Psoas muscle (tissue), 8 donors: ENCODE measurements at regions of chr9 and their contacts with region 1.

Region 1: GRCh38 chr9:131149688-131150053 is 24.3 kb downstream of the NUP214 start:
- DNase-seq: no peak
- ATAC-seq: no peak
- H3K4me3 ChIP-seq: no peak overlapping the region
- H3K27ac ChIP-seq: no peak overlapping the region
- H3K4me1 ChIP-seq: no peaks in the 10 kb centered on the region
- H3K27me3 ChIP-seq: no peaks in the 10 kb centered on the region
- CTCF ChIP-seq: no peak

Region 2: DNA sequence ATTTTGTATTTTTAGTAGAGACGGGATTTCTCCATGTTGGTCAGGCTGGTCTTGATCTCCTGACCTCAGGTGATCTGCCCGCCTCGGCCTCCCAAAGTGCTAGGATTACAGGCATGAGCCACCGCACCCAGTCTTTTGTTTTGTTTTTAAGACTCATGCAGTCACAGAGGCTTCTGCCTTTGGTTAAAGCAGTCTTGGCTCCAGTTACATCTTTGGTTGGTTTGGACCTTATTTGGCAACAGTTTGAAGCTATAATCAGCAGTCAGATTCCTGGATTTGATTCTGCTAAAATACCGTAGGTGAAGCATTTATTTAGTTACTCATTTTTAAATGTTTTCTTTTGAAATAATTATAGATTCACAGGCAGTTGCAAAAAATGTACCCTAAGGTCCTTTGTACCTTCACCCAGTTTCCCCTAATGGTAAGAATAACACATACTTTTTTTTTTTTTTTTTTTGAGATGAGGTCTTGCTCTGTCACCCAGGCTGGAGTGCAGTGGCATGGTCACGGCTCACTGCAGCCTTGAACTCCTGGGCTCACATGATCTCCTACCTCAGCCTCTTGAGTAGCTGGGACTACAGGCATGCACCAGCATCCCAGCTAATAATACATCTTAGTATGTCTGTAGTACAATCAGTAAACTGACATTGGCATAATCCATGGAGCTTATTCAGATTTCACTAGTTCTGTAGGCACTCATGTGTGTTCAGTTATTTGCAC is 1298.7 kb before region 1 on chr9:
- intact Hi-C with region 1: no loop called
- DNase-seq: no peak
- ATAC-seq: no peak
- H3K4me3 ChIP-seq: no peak overlapping the region
- H3K27ac ChIP-seq: no peak overlapping the region
- H3K4me1 ChIP-seq: no peaks in the 10 kb centered on the region
- H3K27me3 ChIP-seq: no peaks in the 10 kb centered on the region
- CTCF ChIP-seq: no peak

Region 3: DNA sequence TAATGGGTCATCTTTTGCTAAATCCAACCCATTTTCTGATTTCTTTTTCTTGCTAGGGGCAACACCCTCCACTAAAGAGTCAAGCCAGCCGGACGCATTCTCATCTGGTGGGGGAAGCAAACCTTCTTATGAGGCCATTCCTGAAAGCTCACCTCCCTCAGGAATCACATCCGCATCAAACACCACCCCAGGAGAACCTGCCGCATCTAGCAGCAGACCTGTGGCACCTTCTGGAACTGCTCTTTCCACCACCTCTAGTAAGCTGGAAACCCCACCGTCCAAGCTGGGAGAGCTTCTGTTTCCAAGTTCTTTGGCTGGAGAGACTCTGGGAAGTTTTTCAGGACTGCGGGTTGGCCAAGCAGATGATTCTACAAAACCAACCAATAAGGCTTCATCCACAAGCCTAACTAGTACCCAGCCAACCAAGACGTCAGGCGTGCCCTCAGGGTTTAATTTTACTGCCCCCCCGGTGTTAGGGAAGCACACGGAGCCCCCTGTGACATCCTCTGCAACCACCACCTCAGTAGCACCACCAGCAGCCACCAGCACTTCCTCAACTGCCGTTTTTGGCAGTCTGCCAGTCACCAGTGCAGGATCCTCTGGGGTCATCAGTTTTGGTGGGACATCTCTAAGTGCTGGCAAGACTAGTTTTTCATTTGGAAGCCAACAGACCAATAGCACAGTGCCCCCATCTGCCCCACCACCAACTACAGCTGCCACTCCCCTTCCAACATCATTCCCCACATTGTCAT is 47.7 kb after region 1 on chr9:
- intact Hi-C with region 1: loop called (anchors 10 kb)
- DNase-seq: no peak
- ATAC-seq: no peak
- H3K4me3 ChIP-seq: no peak overlapping the region
- H3K27ac ChIP-seq: no peak overlapping the region
- H3K4me1 ChIP-seq: no peaks in the 10 kb centered on the region
- H3K27me3 ChIP-seq: no peaks in the 10 kb centered on the region
- CTCF ChIP-seq: no peak

Region 4: GRCh38 chr9:131203431-131204218 is 54.0 kb after region 1 on chr9:
- intact Hi-C with region 1: loop called (anchors 10 kb)
- DNase-seq: no peak
- ATAC-seq: no peak
- H3K4me3 ChIP-seq: no peak overlapping the region
- H3K27ac ChIP-seq: no peak overlapping the region
- H3K4me1 ChIP-seq: no peaks in the 10 kb centered on the region
- H3K27me3 ChIP-seq: no peaks in the 10 kb centered on the region
- CTCF ChIP-seq: no peak

Region 5: GRCh38 chr9:131310833-131311554 is 161.3 kb after region 1 on chr9:
- intact Hi-C with region 1: no loop called
- DNase-seq: peak; percentile 60 to 76
- ATAC-seq: peak; percentile 57 to 72 (median 62)
- H3K4me3 ChIP-seq: no peak overlapping the region
- H3K27ac ChIP-seq: peak overlapping the region; percentile 83
- H3K4me1 ChIP-seq: peaks cover 12% of the 10 kb centered on the region
- H3K27me3 ChIP-seq: no peaks in the 10 kb centered on the region
- CTCF ChIP-seq: no peak

Region 6: GRCh38 chr9:131459056-131459455 is 309.4 kb after region 1 on chr9:
- intact Hi-C with region 1: loop called in 1 of 2 experiments (anchors 10 kb)
- DNase-seq: no peak
- ATAC-seq: peak in 1 of 4 donors; percentile 38
- H3K4me3 ChIP-seq: no peak overlapping the region
- H3K27ac ChIP-seq: no peak overlapping the region
- H3K4me1 ChIP-seq: no peaks in the 10 kb centered on the region
- H3K27me3 ChIP-seq: no peaks in the 10 kb centered on the region
- CTCF ChIP-seq: no peak